ENCODE measurements at regions of chr5 and their contacts with region 1.

Region 1: DNA sequence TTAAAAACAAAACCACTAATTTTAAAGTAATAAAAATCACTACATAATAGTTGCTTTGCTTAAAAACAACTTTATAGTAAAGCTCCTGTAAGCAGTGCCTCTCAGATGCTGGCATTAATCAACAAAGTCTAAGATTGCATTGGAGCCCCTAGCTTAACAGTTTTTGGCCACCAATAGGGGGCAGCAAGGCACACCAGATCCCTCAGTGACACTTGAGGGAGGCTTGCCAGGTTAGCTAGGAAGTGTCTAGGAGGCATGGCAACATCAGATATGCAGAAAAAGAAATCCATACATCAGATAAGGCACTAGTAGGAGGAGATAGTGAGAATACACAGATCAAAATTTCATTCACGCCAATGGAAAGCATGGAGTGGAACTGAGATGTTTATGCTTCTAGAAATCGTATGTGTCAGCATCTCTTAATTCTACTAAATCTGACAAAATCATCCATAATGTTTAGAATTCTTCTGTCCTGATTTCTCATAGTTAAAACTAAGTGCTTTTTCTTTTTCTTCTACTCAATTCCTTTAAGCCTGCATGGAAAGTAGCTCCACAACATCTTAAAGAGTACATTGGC is 73.6 kb upstream of the PAM start:
- DNase-seq: no peak
- H3K4me3 ChIP-seq: no peak overlapping the region
- CTCF ChIP-seq: peak; percentile 84

Region 2: DNA sequence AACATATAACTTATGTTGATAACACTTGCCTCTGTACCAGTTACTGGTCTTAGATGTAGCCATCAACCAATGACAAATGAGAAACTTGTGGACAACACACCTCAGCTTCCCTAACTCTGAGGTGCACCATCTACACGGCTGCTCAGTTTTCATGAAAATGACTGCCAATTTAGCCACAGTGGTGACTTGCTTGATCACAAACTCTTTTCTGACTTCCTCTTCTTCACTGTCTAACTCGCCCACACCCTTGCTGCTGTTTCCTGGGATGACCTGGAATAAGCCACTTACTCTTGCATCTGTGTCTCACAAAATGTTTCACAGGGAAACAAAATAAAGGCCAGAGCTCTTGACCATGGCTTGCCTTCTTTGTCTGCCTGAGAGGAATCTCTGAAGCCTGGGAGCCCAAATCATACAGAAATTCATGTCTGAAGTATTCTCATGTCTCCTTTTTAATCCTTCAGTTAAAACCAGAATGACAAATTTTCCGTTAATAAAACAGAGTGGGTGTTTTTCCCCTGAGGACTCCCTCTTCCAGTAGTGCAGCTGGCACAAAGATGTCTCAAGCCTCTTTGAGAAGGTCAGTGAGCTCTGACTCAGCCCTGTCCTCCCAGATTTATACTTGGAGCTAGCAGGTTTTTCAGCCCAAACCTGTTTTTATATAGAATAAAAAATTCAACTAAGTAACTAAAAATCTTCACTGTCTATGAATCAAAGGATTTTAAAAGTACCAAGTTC is 52.9 kb before region 1 on chr5:
- CTCF ChIA-PET with region 1: no interaction called
- POLR2A ChIA-PET with region 1: no interaction called
- DNase-seq: no peak
- H3K4me3 ChIP-seq: no peak overlapping the region
- CTCF ChIP-seq: no peak

Region 3: GRCh38 chr5:102638912-102639652 is 42.4 kb before region 1 on chr5:
- CTCF ChIA-PET with region 1: no interaction called
- POLR2A ChIA-PET with region 1: no interaction called
- DNase-seq: no peak
- H3K4me3 ChIP-seq: no peak overlapping the region
- CTCF ChIP-seq: no peak

Region 4: GRCh38 chr5:102666164-102666946 is 15.1 kb before region 1 on chr5:
- CTCF ChIA-PET with region 1: interaction called, 17 read pairs
- POLR2A ChIA-PET with region 1: no interaction called
- DNase-seq: no peak
- H3K4me3 ChIP-seq: no peak overlapping the region
- CTCF ChIP-seq: no peak

Region 5: DNA sequence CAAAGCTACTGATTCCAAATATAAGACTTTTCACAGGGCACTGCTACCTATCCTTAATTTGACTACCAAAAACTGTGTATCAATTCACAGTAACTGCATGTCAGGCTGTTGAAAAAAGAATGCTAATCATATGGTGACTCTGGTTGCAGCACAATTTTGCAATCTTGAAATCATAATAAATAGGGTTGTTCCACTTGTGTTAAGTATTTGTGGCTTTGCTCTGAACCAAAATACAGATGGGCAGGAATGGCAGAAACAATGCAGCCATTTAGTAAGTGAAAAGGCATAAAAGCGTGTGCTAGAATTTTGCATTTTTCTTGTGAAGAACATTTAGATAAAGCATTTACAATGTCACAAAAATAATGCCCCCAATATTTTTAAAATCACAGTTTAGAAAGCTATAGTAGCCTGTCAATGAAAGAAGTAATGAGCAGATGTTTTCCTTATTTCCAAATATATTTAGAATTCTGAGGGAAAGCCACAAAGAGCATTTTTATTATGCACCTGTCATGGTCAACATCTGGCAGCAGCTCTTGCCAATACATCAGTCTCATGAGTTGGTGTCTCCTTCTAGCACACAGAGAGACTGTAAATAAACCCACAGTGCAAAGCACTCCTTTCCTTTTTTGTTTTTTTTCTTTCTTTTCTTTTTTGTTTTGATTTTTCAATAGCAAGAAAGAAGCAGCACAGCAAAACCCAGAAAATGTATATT is 18.8 kb after region 1 on chr5:
- CTCF ChIA-PET with region 1: interaction called, 16 read pairs
- POLR2A ChIA-PET with region 1: no interaction called
- DNase-seq: no peak
- H3K4me3 ChIP-seq: no peak overlapping the region
- CTCF ChIP-seq: no peak

Region 6: GRCh38 chr5:102718819-102719218 is 37.3 kb after region 1 on chr5:
- CTCF ChIA-PET with region 1: interaction called, 16 read pairs
- POLR2A ChIA-PET with region 1: no interaction called
- DNase-seq: no peak
- H3K4me3 ChIP-seq: no peak overlapping the region
- CTCF ChIP-seq: no peak

Region 7: DNA sequence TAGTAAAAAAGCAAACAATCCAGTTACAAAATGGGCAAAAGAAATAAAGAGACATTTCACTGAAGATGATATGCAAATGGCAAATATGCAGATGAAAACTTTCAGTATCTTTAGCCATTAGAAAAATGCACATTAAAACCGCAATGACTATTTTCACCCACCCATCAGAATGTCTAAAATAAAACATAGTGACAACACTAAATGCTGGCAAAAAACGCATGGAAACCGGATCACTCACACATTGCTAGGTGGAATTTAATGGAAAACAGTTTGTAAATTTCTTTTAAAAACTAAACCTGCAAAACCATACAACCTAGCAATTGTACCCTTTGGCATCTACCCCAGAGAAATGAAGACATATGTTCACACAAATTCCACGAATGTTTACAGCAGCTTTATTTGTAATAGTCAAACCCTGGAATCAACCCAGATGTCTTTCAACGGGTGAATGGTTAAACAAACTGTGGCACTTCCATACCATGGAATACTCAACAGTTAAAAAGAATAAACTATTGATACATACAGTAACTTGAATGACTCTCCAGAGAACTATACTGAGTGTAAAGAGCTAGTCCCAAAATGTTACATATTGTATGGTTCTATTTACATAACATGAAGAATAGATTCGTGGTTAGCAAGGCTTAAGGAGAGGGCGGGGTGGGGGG is 56.4 kb after region 1 on chr5:
- CTCF ChIA-PET with region 1: no interaction called
- POLR2A ChIA-PET with region 1: no interaction called
- DNase-seq: no peak
- H3K4me3 ChIP-seq: no peak overlapping the region
- CTCF ChIP-seq: no peak

Region 8: DNA sequence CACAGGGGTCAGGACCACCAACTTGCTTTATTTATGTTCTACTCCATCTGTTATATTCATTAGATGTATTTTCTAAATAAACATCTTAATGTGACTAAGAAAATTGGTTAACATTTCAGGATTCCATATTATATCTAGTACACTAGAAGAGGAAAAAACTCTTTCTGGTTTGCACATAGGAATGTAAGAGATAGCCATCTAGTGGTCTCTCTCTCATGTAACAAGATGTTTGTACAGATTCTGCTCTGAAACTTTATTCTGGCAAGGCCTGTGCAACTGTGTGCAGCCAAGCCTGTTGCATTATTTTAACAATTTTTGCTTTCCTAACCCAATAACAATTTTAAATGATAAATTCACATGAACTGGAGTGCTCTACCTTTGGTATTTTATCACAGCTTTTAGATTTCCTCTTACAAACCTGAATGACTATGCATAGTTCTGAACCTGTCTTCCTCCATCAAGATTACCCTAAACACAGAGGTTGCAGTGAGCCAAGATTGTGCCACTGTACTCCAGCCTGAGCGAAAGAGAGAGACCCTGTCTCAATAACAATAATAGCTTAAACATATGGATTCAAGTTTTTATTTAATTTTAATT is 290.3 kb after region 1 on chr5:
- CTCF ChIA-PET with region 1: interaction called, 48 read pairs
- POLR2A ChIA-PET with region 1: no interaction called
- DNase-seq: peak; percentile 23
- H3K4me3 ChIP-seq: no peak overlapping the region
- CTCF ChIP-seq: peak; percentile 42

Region 9: GRCh38 chr5:103041071-103041676 is 359.7 kb after region 1 on chr5:
- CTCF ChIA-PET with region 1: interaction called, 45 read pairs
- POLR2A ChIA-PET with region 1: no interaction called
- DNase-seq: no peak
- H3K4me3 ChIP-seq: no peak overlapping the region
- CTCF ChIP-seq: peak; percentile 32